ENCODE measurements at regions of chr13 and their contacts with region 1.

Region 1: DNA sequence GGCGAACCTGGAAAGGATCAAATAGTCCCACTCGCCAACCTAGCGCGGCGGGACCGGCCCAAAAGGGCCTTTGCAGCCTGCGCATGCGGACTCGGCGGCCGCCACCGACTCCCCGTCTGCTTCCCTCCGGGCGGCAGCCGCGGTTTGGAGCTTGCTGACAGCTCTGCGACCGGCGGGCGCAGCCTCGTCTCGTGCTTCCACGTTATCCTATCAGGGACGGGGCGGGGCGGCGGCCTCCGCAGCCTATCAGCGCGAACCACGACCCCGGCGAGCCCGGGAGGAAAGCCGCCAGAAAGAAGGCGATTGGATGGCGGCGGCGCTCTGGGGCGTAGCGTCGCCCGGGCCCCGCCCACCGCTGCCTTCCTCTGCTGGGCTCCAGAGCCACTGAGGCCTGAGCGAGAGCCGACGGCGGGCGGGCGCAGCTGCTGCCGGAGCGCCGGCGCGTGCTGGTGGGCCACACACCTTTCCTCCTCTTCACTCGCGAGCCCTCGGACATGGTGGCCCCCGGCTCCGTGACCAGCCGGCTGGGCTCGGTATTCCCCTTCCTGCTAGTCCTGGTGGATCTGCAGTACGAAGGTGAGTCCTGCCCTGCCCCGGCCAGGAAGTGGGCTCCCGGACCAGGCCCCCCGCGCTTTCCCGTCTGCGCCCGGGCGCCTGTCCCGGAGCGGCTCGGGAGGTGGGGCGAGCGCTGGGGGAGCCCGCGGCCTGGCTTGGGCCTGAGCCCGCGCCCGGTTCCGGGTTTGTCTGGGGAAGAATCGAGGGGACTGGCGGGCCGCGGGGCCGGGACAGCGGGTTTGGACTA is at the start of gene DNAJC3:
- DNase-seq: peak; percentile 99 to 100
- ATAC-seq: peak; percentile 100
- H3K4me3 ChIP-seq: peak within 1 kb of the TSS; percentile 66 to 81
- H3K27ac ChIP-seq: peak within 1 kb of the TSS; percentile 58 to 90
- H3K4me1 ChIP-seq: no peaks in the 10 kb centered on the region
- H3K27me3 ChIP-seq: no peaks in the 10 kb centered on the region
- total RNA-seq, gene DNAJC3: 57.8 to 60.3 TPM

Region 2: GRCh38 chr13:95509521-95510310 is 167.2 kb before region 1 on chr13:
- intact Hi-C with region 1: loop called in 1 of 2 experiments (anchors 10 kb)
- DNase-seq: no peak
- ATAC-seq: no peak
- H3K4me3 ChIP-seq: no peak overlapping the region
- H3K27ac ChIP-seq: no peak overlapping the region
- H3K4me1 ChIP-seq: peaks cover 0 to 4% of the 10 kb centered on the region in 2 donors
- H3K27me3 ChIP-seq: no peaks in the 10 kb centered on the region

Region 3: GRCh38 chr13:95644601-95645052 is 32.3 kb before region 1 on chr13 and contains the start of gene DZIP1:
- intact Hi-C with region 1: loop called in 1 of 2 experiments (anchors 5 kb)
- DNase-seq: peak; percentile 87 to 91
- ATAC-seq: peak; percentile 92
- H3K4me3 ChIP-seq: peak within 1 kb of the TSS; percentile 76 to 82
- H3K27ac ChIP-seq: no peak within 1 kb of the TSS
- H3K4me1 ChIP-seq: peaks cover 0 to 2% of the 10 kb centered on the region in 2 donors
- H3K27me3 ChIP-seq: no peaks in the 10 kb centered on the region
- total RNA-seq, gene DZIP1: 17.4 to 25.3 TPM

Region 4: DNA sequence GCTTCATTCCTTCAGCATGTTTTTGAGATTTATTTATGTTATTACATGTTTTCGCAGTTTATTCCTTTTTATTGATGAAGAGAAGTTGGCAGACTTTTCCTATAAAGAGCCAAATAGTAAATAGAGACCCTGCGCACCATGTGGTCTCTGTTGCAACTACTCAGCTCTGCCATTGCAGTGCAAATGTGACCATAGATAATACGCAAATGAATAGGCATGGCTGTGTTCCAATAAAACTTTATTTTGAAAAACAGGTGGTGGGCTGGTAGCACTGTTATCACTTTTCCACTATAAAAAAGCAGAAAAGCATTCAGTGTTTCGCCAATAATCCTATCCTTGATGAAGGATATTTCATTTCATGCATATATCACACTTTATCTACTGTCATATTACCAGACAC is 94.9 kb after region 1 on chr13:
- intact Hi-C with region 1: loop called in 1 of 2 experiments (anchors 5 kb)
- DNase-seq: no peak
- ATAC-seq: no peak
- H3K4me3 ChIP-seq: no peak overlapping the region
- H3K27ac ChIP-seq: no peak overlapping the region
- H3K4me1 ChIP-seq: no peaks in the 10 kb centered on the region
- H3K27me3 ChIP-seq: no peaks in the 10 kb centered on the region

Region 5: DNA sequence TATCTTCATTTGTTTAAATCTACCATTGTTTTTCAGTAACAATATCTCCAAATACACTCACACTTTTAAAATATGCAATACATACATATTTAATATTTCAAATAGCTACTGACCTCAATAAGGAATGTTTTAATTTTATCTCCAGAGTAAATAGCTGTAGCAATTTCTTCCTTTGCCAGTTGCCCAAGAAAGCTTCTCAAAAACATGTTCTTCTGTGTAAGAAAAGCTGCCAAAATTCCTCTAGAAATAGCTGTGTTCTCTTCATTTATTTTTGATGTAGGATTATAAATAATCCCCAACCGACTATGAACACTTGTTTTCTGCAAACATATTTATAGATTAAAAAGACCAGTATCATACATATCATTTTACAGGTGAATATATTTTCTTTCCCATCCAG is 225.8 kb after region 1 on chr13:
- intact Hi-C with region 1: no loop called
- DNase-seq: no peak
- ATAC-seq: no peak
- H3K4me3 ChIP-seq: no peak overlapping the region
- H3K27ac ChIP-seq: no peak overlapping the region
- H3K4me1 ChIP-seq: peaks cover 0 to 1% of the 10 kb centered on the region in 2 donors
- H3K27me3 ChIP-seq: no peaks in the 10 kb centered on the region

Measured in aorta (tissue), 5 donors.